Naive thymus-derived CD4-positive, alpha-beta T cell (primary cell): ENCODE measurements at regions of chr2 and their contacts with region 1.

Region 1: DNA sequence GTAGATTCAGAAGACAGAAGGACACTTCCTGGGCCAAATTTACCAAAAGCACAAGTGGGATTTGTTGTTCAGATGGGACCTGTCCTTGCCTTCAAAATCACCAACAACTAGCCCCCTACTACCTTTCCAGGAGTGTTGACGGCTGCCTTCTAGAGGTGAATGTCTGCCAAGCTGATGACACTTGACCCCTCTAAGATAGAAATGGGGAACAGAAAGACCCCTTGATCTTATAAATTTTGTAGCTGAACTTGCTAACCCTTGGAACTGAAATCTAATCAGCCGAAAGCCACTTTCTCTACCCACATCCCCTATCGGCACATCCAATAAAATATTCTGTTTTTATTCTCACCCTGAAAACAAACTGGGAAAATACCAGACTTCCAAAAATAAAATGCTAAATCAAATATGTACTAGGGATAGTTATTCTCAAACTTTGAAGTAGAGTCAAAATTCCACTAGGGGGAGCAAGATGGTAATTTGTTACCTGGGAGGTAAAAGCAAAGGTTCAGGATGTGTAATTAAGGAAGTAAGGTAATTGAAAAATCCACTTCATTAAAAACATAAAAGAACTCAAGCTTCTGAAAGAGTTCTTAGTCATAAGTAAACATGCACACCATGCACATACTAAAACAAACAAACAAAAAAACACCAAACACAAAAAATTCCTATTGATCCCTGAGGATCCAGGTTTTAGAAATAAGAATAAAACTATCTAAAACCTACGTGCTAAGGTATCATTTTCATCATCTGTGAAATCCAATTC is 119.2 kb downstream of the ANKRD44 start:
- DNase-seq: peak in 7 of 9 donors; percentile 59 to 75 (median 72)
- ATAC-seq: peak; percentile 78
- H3K4me3 ChIP-seq: no peak overlapping the region
- H3K4me3 Mint-ChIP-seq: peak overlapping the region in 9 of 10 donors; percentile 12 to 78 (median 51)
- H3K27ac ChIP-seq: peak overlapping the region; percentile 65
- H3K27ac Mint-ChIP-seq: peak overlapping the region; percentile 74 to 91 (median 79)
- H3K4me1 ChIP-seq: peaks cover 56 to 72% of the 10 kb centered on the region in 2 donors
- H3K4me1 Mint-ChIP-seq: peaks cover 49 to 95% (median 90%) of the 10 kb centered on the region in 7 donors
- H3K27me3 ChIP-seq: no peaks in the 10 kb centered on the region
- H3K27me3 Mint-ChIP-seq: no peaks in the 10 kb centered on the region

Region 2: GRCh38 chr2:197152451-197153228 is 38.7 kb before region 1 on chr2:
- CTCF ChIA-PET with region 1: interaction called, 10 read pairs
- POLR2A ChIA-PET with region 1: interaction called, 3 read pairs
- intact Hi-C with region 1: loop called in 1 of 2 experiments (anchors 2 kb)
- DNase-seq: peak in 7 of 9 donors; percentile 53 to 66 (median 59)
- ATAC-seq: peak; percentile 93
- H3K4me3 ChIP-seq: peak overlapping the region; percentile 10
- H3K4me3 Mint-ChIP-seq: peak overlapping the region; percentile 56 to 83 (median 78)
- H3K27ac ChIP-seq: peak overlapping the region; percentile 57
- H3K27ac Mint-ChIP-seq: peak overlapping the region; percentile 68 to 98 (median 92)
- H3K4me1 ChIP-seq: peaks cover 37 to 59% of the 10 kb centered on the region in 2 donors
- H3K4me1 Mint-ChIP-seq: peaks cover 65 to 92% (median 85%) of the 10 kb centered on the region in 7 donors
- H3K27me3 ChIP-seq: no peaks in the 10 kb centered on the region
- H3K27me3 Mint-ChIP-seq: no peaks in the 10 kb centered on the region

Region 3: GRCh38 chr2:197209742-197210408 is 18.5 kb after region 1 on chr2:
- CTCF ChIA-PET with region 1: interaction called, 12 read pairs
- POLR2A ChIA-PET with region 1: interaction called, 254 read pairs
- intact Hi-C with region 1: loop called in 1 of 2 experiments (anchors 1 kb)
- DNase-seq: peak in 5 of 9 donors; percentile 34 to 73 (median 50)
- ATAC-seq: peak; percentile 23
- H3K4me3 ChIP-seq: peak overlapping the region; percentile 12
- H3K4me3 Mint-ChIP-seq: peak overlapping the region; percentile 61 to 86 (median 78)
- H3K27ac ChIP-seq: peak overlapping the region; percentile 82
- H3K27ac Mint-ChIP-seq: peak overlapping the region; percentile 79 to 100 (median 98)
- H3K4me1 ChIP-seq: peaks cover 93 to 98% of the 10 kb centered on the region in 2 donors
- H3K4me1 Mint-ChIP-seq: peaks cover 76 to 99% (median 97%) of the 10 kb centered on the region in 7 donors
- H3K27me3 ChIP-seq: no peaks in the 10 kb centered on the region
- H3K27me3 Mint-ChIP-seq: no peaks in the 10 kb centered on the region

Region 4: DNA sequence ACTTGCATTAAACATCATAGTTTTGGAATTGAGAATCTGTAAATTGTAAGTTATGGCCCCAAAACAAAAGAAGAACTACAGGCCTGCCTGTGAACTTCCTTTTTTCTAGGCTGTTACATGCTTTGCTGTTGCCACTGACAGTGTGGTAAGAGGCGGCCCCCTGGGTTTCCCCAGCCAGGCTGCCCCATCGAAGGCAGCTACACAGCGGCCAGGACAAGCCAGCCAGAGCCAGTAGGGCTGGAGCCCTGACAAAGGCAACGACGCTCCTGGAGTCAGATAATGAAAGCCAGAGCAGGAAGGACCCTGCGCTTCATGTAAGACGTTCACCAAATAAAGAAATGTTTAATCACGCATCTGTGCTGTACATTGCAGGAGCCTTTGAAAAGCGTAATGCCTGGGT is 64.2 kb after region 1 on chr2:
- CTCF ChIA-PET with region 1: interaction called, 6 read pairs
- POLR2A ChIA-PET with region 1: interaction called, 4 read pairs
- intact Hi-C with region 1: loop called (anchors 1 kb)
- DNase-seq: peak in 7 of 9 donors; percentile 47 to 83 (median 56)
- ATAC-seq: peak; percentile 96
- H3K4me3 ChIP-seq: peak overlapping the region; percentile 38
- H3K4me3 Mint-ChIP-seq: peak overlapping the region; percentile 69 to 88 (median 77)
- H3K27ac ChIP-seq: peak overlapping the region; percentile 80
- H3K27ac Mint-ChIP-seq: peak overlapping the region; percentile 84 to 98 (median 94)
- H3K4me1 ChIP-seq: peaks cover 68 to 74% of the 10 kb centered on the region in 2 donors
- H3K4me1 Mint-ChIP-seq: peaks cover 58 to 98% (median 82%) of the 10 kb centered on the region in 7 donors
- H3K27me3 ChIP-seq: no peaks in the 10 kb centered on the region
- H3K27me3 Mint-ChIP-seq: no peaks in the 10 kb centered on the region

Region 5: GRCh38 chr2:197286805-197287598 is 95.6 kb after region 1 on chr2:
- CTCF ChIA-PET with region 1: no interaction called
- POLR2A ChIA-PET with region 1: no interaction called
- intact Hi-C with region 1: no loop called
- DNase-seq: peak in 7 of 9 donors; percentile 52 to 83 (median 74)
- ATAC-seq: peak; percentile 96
- H3K4me3 ChIP-seq: no peak overlapping the region
- H3K4me3 Mint-ChIP-seq: peak overlapping the region; percentile 70 to 90 (median 86)
- H3K27ac ChIP-seq: peak overlapping the region; percentile 55
- H3K27ac Mint-ChIP-seq: peak overlapping the region; percentile 87 to 99 (median 98)
- H3K4me1 ChIP-seq: peaks cover 75 to 90% of the 10 kb centered on the region in 2 donors
- H3K4me1 Mint-ChIP-seq: peaks cover 60 to 96% (median 83%) of the 10 kb centered on the region in 7 donors
- H3K27me3 ChIP-seq: no peaks in the 10 kb centered on the region
- H3K27me3 Mint-ChIP-seq: no peaks in the 10 kb centered on the region

Region 6: GRCh38 chr2:197356136-197356535 is 164.8 kb after region 1 on chr2:
- CTCF ChIA-PET with region 1: interaction called, 3 read pairs
- POLR2A ChIA-PET with region 1: interaction called, 3 read pairs
- intact Hi-C with region 1: loop called (anchors 1 kb)
- DNase-seq: peak in 5 of 9 donors; percentile 25 to 42 (median 39)
- ATAC-seq: peak; percentile 70
- H3K4me3 ChIP-seq: no peak overlapping the region
- H3K4me3 Mint-ChIP-seq: peak overlapping the region in 8 of 10 donors; percentile 6 to 57 (median 30)
- H3K27ac ChIP-seq: no peak overlapping the region
- H3K27ac Mint-ChIP-seq: peak overlapping the region in 7 of 9 donors; percentile 1 to 82 (median 31)
- H3K4me1 ChIP-seq: peaks cover 0 to 10% of the 10 kb centered on the region in 2 donors
- H3K4me1 Mint-ChIP-seq: peaks cover 5 to 35% (median 30%) of the 10 kb centered on the region in 7 donors
- H3K27me3 ChIP-seq: no peaks in the 10 kb centered on the region
- H3K27me3 Mint-ChIP-seq: no peaks in the 10 kb centered on the region

Region 7: DNA sequence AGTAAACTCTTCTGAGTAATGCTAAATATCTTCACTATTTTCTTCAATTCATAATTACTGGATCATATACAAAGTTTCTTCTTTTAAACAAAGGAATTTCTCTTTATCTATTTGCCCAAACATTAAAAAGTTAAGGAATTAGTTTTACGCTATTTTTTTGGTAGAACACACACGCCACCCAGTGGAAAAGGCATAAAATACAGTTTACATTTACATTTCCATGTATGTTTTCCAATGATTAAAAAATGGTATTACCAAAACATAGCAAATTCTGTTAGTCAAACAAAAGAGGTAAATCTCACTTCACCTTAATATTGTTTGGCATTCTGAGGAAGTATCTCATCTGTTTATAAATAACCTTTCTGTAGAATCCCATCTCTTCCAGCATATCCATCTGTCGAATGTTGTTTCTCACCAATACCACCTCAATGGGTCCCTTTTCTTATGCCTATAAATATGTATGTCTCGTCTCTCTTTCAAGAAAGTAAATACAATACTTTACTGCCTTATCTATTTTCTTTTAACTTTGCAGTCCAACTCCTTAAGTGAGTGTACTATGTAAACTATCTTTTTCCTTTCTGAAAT is 586.6 kb after region 1 on chr2:
- CTCF ChIA-PET with region 1: no interaction called
- POLR2A ChIA-PET with region 1: no interaction called
- intact Hi-C with region 1: loop called in 1 of 2 experiments (anchors 10 kb)
- DNase-seq: peak in 5 of 9 donors; percentile 30 to 50 (median 37)
- ATAC-seq: no peak
- H3K4me3 ChIP-seq: no peak overlapping the region
- H3K4me3 Mint-ChIP-seq: no peak overlapping the region
- H3K27ac ChIP-seq: no peak overlapping the region
- H3K27ac Mint-ChIP-seq: no peak overlapping the region
- H3K4me1 ChIP-seq: no peaks in the 10 kb centered on the region
- H3K4me1 Mint-ChIP-seq: peaks cover 0 to 6% (median 0%) of the 10 kb centered on the region in 7 donors
- H3K27me3 ChIP-seq: no peaks in the 10 kb centered on the region
- H3K27me3 Mint-ChIP-seq: peaks cover 4 to 26% (median 9%) of the 10 kb centered on the region in 5 donors